Activated CD8-positive, alpha-beta T cell treated with anti-CD3 and anti-CD28 coated beads for 36 hours (primary cell): ENCODE measurements at regions of chr7 and their contacts with region 1.

Region 1: DNA sequence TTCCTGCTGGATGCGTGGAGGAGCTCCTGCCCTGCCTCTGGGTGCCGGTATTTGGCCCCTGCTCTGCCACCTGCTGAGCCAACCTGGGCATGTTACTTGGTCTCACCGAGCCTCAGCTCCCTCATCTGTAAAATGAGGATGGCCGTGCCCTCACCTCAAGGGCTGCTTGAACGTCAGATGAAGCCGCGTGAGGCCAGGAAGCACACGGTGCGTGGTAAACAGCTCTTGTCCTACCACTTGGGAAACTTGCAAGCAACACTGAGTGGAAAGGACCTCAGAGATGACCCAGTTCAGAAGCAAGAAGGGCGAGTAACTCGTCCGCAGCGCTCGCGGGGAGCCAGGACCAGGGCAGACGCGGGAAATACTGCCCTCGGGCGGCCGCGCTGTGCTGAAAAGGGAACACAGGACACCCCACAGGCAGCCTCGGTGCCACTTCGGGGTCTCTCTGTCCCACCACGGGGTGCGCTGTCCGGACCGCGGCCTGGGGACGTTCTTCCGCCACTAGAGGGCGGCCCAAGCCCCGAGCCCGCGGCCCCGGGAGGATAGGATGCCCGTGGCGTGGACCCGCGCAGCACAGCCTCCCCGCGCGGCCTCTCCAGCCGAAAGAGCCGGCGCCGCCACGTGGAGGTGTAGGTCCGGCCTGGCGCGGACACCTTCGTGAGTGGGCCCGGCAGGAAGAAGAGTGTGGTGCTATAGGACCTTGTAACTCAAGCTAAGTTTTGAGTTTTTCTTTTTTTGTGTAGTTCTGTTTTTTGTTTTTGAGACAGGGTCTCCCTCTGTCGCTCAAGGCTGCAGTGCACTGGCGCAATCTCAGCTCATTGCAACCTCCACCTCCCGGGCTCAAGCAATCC is 94.1 kb downstream of the PRKAG2 start:
- DNase-seq: peak; percentile 86
- ATAC-seq: peak; percentile 94
- H3K4me3 Mint-ChIP-seq: peak overlapping the region; percentile 74
- H3K27ac Mint-ChIP-seq: peak overlapping the region; percentile 89
- H3K4me1 Mint-ChIP-seq: peaks cover 11% of the 10 kb centered on the region
- H3K27me3 Mint-ChIP-seq: no peaks in the 10 kb centered on the region
- CTCF ChIP-seq: peak; percentile 99

Region 2: DNA sequence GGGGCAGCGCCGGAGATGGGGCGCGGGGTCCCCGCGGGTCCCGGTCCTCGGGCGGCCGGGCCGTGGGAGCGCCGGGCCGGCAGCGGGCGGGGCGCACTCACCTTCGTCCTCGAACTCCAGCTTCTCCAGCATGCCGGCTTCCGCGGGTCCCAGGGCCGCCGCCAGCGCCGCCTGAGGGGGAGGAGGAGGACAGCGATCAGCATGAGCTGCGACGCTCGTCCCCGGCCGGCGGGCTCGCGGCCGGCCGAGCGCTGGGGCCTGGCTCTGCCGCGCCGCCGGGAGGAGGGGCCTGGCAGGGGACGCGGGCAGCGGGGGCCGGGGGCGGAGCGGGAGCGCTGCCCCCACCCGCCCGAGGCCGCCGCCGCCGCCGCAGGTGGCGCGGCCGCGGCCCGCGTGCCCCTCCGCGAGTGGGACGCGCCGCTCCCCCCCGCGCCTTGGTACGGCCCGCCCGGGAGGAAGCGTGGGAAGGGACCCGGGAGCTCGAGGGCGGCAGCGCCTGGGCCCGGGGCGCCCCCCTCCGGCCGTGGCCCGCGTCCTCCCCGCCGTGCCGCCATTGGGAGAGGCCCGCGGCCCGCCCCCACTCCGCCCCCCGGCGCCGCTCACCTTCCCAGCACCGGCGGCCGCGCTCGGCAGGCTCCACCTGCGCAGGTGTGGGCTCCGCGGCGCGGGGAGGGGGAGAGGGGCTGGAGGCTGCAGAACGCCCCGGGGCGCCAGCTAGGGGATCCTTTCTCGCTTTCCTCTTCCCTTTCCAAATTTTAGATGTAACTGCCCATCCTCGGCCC is 150.7 kb before region 1 on chr7:
- CTCF ChIA-PET with region 1: interaction called, 23 read pairs
- POLR2A ChIA-PET with region 1: no interaction called
- intact Hi-C with region 1: no loop called
- DNase-seq: peak; percentile 84
- ATAC-seq: peak; percentile 80
- H3K4me3 Mint-ChIP-seq: peak overlapping the region; percentile 88
- H3K27ac Mint-ChIP-seq: peak overlapping the region; percentile 95
- H3K4me1 Mint-ChIP-seq: peaks cover 27% of the 10 kb centered on the region
- H3K27me3 Mint-ChIP-seq: no peaks in the 10 kb centered on the region
- CTCF ChIP-seq: peak; percentile 23

Region 3: GRCh38 chr7:151769188-151769841 is 13.5 kb before region 1 on chr7:
- CTCF ChIA-PET with region 1: interaction called, 107 read pairs
- POLR2A ChIA-PET with region 1: interaction called, 25 read pairs
- intact Hi-C with region 1: no loop called
- DNase-seq: peak; percentile 76
- ATAC-seq: peak; percentile 93
- H3K4me3 Mint-ChIP-seq: peak overlapping the region; percentile 66
- H3K27ac Mint-ChIP-seq: peak overlapping the region; percentile 91
- H3K4me1 Mint-ChIP-seq: peaks cover 68% of the 10 kb centered on the region
- H3K27me3 Mint-ChIP-seq: no peaks in the 10 kb centered on the region
- CTCF ChIP-seq: no peak

Region 4: DNA sequence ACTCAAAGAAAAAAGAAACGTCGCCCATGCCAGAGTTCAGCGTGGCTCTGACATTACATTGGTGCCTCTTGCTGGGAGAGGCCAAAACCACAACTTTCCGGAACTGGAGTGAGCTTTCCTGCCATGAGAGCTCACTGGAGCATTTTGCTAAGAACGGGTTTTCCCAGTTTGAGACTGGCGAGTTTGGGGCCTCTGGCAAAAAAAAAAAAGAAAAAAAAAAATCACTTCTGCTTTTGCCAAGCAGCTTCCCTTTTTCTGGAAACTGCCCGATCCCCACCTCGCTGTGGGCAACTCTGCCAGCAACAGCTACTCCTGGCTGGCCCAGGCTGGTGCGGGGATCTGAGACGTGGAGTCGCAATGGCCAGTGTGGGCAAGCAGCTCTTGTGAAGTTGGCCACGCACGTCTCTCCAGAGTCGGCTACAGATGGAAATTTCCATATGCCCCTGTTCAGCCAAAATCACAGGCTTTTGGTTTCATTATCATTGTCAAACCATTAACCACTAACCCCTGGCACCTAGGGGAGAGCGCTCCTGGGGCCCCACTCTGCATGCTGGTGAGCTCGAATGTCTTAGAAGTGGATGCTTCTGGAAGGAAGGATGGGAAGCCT is 68.4 kb after region 1 on chr7:
- CTCF ChIA-PET with region 1: interaction called, 20 read pairs
- POLR2A ChIA-PET with region 1: interaction called, 3 read pairs
- intact Hi-C with region 1: no loop called
- DNase-seq: peak; percentile 67
- ATAC-seq: peak; percentile 85
- H3K4me3 Mint-ChIP-seq: peak overlapping the region; percentile 60
- H3K27ac Mint-ChIP-seq: peak overlapping the region; percentile 56
- H3K4me1 Mint-ChIP-seq: peaks cover 27% of the 10 kb centered on the region
- H3K27me3 Mint-ChIP-seq: no peaks in the 10 kb centered on the region
- CTCF ChIP-seq: no peak

Region 5: GRCh38 chr7:151925446-151926335 is 142.9 kb after region 1 on chr7:
- CTCF ChIA-PET with region 1: interaction called, 4 read pairs
- POLR2A ChIA-PET with region 1: no interaction called
- intact Hi-C with region 1: loop called (anchors 5 kb)
- DNase-seq: peak; percentile 33
- ATAC-seq: peak; percentile 70
- H3K4me3 Mint-ChIP-seq: no peak overlapping the region
- H3K27ac Mint-ChIP-seq: peak overlapping the region; percentile 8
- H3K4me1 Mint-ChIP-seq: peaks cover 9% of the 10 kb centered on the region
- H3K27me3 Mint-ChIP-seq: peaks cover 7% of the 10 kb centered on the region
- CTCF ChIP-seq: no peak